ENCODE measurements at regions of chr17 and their contacts with region 1.

Region 1: GRCh38 chr17:67452681-67453554 is 75.8 kb downstream of the PITPNC1 start:
- DNase-seq: peak; percentile 83
- H3K4me3 Mint-ChIP-seq: peak overlapping the region; percentile 76
- H3K27ac Mint-ChIP-seq: peak overlapping the region; percentile 97
- H3K4me1 Mint-ChIP-seq: peaks cover 60% of the 10 kb centered on the region
- H3K27me3 Mint-ChIP-seq: no peaks in the 10 kb centered on the region

Region 2: GRCh38 chr17:67421869-67422273 is 31.0 kb before region 1 on chr17:
- intact Hi-C with region 1: loop called (anchors 1 kb)
- DNase-seq: peak; percentile 88
- H3K4me3 Mint-ChIP-seq: peak overlapping the region; percentile 6
- H3K27ac Mint-ChIP-seq: peak overlapping the region; percentile 79
- H3K4me1 Mint-ChIP-seq: peaks cover 42% of the 10 kb centered on the region
- H3K27me3 Mint-ChIP-seq: no peaks in the 10 kb centered on the region

Region 3: DNA sequence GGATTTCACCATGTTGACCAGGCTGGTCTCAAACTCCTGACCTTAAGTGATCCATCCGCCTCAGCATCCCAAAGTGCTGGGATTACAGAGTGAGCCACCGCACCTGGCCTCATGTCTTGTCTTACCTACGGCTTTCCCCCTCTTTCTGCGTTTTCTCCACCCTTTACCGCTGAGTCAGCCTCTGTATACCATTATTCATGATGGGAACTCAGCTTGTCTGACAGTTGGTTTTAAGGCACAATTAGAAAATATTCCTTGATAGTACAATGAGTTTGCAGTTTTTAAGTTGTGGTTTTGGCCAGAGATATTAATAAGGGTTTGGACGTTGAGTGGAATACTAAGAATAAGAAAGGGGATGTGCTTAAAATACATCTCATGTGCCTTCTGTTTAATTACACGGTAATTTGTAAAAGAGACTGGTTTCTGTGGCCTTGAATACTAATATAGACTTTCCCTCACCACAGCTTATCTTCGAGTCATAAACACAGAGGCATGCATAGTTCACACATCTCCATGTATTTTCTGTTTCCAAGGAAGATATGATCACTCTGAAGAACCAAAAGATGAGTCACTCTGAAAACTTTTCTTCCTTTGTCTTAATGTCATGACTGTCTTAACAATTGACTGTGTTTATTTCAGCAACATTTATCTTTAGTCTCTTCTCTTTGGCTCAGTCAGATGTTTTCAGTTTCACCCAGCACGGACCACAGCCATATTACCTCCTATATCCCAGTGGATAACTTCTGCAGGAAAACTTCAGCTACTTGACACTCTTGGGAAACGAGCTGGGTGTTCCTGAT is 21.5 kb before region 1 on chr17:
- intact Hi-C with region 1: loop called (anchors 1 kb)
- DNase-seq: peak; percentile 66
- H3K4me3 Mint-ChIP-seq: peak overlapping the region; percentile 74
- H3K27ac Mint-ChIP-seq: peak overlapping the region; percentile 93
- H3K4me1 Mint-ChIP-seq: peaks cover 55% of the 10 kb centered on the region
- H3K27me3 Mint-ChIP-seq: no peaks in the 10 kb centered on the region

Region 4: DNA sequence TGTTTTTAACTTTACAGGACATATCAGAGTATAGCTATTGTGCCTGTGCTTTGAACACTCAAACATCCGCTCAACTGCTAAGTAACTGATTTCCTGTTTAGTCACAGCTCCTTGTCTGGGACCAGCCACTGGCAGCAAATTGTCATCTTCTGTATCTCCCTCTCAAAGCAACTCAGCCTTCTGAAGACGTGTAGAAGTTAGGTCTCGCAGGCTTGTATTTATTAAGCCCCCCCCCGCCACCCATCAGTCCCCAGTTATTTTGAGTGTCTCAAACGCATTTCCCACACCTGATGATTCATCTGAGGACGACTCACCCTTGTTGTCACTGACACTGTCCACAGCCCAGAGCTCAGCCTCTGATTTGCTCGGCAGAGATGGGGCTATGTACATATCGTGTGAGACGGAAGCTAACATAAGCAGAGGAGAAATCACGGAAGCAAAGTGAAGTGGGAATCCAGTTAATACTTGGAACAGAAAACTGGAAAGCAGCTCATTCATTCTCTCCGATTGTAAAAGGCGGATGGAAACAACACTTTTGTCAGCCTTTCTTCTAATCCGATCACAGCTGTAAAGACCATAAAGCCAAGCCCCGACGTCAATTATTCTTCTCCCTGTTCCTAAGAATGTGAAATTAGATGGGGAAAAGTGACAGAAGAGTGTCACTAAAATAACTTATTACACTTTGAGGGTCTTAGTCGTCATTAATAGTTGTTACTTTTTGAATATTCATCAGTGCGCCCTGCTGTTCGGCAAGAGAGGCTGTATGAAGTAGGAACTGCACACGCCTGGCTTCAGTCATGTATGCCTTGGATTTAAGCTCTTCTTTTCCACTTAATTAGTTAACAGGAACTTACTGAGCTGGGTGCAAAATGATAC is 11.6 kb before region 1 on chr17:
- intact Hi-C with region 1: loop called (anchors 1 kb)
- DNase-seq: peak; percentile 90
- H3K4me3 Mint-ChIP-seq: peak overlapping the region; percentile 84
- H3K27ac Mint-ChIP-seq: peak overlapping the region; percentile 96
- H3K4me1 Mint-ChIP-seq: peaks cover 51% of the 10 kb centered on the region
- H3K27me3 Mint-ChIP-seq: no peaks in the 10 kb centered on the region